ENCODE measurements at regions of chr17 and their contacts with region 1.

Region 1: GRCh38 chr17:48612854-48613691 is 2.0 kb downstream of the HOXB8 start:
- DNase-seq: peak; percentile 88
- H3K4me3 ChIP-seq: 0 out of 4 replicates have a peak overlapping the region, but pooled peaks of 1 of the 2 experiments have one; percentile 15
- H3K27ac ChIP-seq: no peak overlapping the region
- H3K4me1 ChIP-seq: no peaks in the 10 kb centered on the region; a peak in 1 of 4 replicates
- H3K27me3 ChIP-seq: peaks cover 99% of the 10 kb centered on the region
- CTCF ChIP-seq: no peak
- EP300 ChIP-seq: no peak
- RAD21 ChIP-seq: no peak

Region 2: DNA sequence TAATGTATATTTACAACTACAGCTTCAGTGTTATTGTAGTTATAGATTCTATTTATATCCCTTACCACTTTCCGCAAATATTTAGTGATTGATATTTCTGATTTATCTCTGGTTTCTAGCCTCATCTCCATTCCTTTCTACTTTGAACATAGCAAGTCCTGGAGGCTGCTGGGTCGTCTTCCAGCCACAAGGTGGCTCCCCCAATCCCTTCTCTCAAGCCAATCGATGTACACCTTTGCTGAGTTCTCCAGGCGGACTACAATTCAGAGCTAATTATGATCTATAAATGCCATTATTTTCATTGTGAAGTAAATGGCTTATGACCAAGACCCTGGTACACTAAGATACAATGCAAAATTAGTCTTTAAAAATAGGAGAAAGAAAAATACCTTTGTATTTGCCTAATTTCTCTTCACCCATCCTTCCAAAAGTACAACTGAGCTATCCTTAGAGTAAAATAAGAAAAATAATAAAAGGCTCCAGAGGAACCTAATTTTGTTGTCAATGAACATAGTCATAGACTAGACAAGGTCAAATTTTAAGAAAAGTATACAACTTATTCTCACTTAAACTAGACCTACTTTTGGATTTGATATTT is 305.2 kb before region 1 on chr17:
- CTCF ChIA-PET with region 1: interaction called, 59 read pairs
- POLR2A ChIA-PET with region 1: no interaction called
- DNase-seq: peak; percentile 48
- H3K4me3 ChIP-seq: no peak overlapping the region; a peak in 1 of 4 replicates
- H3K27ac ChIP-seq: no peak overlapping the region
- H3K4me1 ChIP-seq: no peaks in the 10 kb centered on the region; a peak in 1 of 4 replicates
- H3K27me3 ChIP-seq: peaks cover 52% of the 10 kb centered on the region
- CTCF ChIP-seq: peak; percentile 97
- EP300 ChIP-seq: no peak
- RAD21 ChIP-seq: peak; percentile 67

Region 3: GRCh38 chr17:48526608-48527546 is 86.2 kb before region 1 on chr17:
- CTCF ChIA-PET with region 1: no interaction called
- POLR2A ChIA-PET with region 1: no interaction called
- DNase-seq: peak; percentile 32
- H3K4me3 ChIP-seq: no peak overlapping the region
- H3K27ac ChIP-seq: no peak overlapping the region
- H3K4me1 ChIP-seq: no peaks in the 10 kb centered on the region
- H3K27me3 ChIP-seq: peaks cover 98% of the 10 kb centered on the region
- CTCF ChIP-seq: no peak
- EP300 ChIP-seq: no peak
- RAD21 ChIP-seq: no peak

Region 4: DNA sequence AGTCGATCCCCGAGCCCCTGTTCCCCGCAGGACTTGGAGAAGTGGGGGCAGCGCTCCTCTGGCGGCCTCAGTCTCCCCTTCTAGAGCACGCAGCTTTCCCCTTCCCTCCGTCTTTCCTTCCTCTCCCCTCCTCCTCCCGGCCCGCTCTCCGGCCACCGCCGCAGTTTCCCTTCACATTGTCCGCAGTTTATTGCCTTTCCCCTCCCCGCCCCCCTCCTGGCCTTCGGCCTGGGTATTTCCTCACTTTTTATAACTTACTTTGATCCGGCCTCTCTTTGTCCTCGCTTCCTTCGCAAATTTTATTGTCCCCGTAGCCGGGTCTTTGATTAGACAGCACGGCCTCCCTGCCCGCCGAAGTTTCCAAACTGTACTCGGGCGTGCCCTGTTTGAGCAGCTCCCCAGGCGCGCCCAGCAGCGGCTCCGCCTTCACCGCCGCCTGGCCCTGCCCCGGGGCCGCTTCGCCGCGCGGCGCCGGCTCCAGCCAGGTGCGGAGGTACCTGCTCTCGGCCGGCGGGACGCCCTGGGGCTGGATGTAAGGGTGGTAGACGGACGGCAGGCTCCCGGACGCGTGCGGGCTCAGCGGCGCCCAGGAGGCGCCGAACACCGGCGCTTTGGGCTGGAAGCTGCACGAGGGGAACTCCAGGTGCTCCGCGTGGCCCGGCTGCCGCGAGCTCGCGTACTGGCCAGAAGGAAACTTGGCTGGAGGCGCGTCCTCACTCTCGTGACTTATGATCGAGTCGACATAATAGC is 12.6 kb after region 1 on chr17:
- CTCF ChIA-PET with region 1: interaction called, 23 read pairs
- POLR2A ChIA-PET with region 1: no interaction called
- DNase-seq: no peak
- H3K4me3 ChIP-seq: no peak overlapping the region
- H3K27ac ChIP-seq: no peak overlapping the region
- H3K4me1 ChIP-seq: no peaks in the 10 kb centered on the region
- H3K27me3 ChIP-seq: peaks cover 98% of the 10 kb centered on the region
- CTCF ChIP-seq: no peak
- EP300 ChIP-seq: no peak
- RAD21 ChIP-seq: no peak

Region 5: GRCh38 chr17:48636177-48637018 is 23.3 kb after region 1 on chr17:
- CTCF ChIA-PET with region 1: interaction called, 33 read pairs
- POLR2A ChIA-PET with region 1: no interaction called
- DNase-seq: peak; percentile 91
- H3K4me3 ChIP-seq: peak overlapping the region in 1 of 2 experiments; percentile 21; a peak in 1 of 4 replicates
- H3K27ac ChIP-seq: no peak overlapping the region
- H3K4me1 ChIP-seq: no peaks in the 10 kb centered on the region
- H3K27me3 ChIP-seq: peaks cover 100% of the 10 kb centered on the region
- CTCF ChIP-seq: peak; percentile 69
- EP300 ChIP-seq: no peak
- RAD21 ChIP-seq: no peak

Region 6: DNA sequence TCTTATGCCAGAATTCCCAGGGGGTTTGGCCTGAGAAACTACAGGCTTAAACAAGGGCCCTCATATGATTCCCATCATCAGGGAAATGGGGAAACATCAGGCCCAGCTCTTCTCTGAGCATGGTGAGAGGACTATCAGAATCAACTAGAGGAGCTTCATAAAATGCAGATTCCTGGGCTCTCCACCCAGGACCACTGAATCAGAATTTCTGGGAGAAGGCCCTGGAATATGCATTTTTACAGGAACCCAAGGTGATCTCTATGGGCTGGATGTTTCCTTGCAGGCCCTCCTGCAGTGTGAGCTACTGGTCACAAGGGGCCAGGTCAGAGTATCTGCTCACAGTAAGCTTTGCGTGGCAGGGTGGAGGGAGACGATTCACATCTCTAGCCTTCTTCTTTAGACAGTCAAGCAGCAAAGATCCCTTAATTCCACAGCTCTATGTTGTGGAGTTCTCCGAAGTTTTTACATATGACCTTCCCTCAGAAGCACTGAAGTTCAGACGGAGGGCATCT is 154.2 kb after region 1 on chr17:
- CTCF ChIA-PET with region 1: no interaction called
- POLR2A ChIA-PET with region 1: no interaction called
- DNase-seq: no peak
- H3K4me3 ChIP-seq: no peak overlapping the region
- H3K27ac ChIP-seq: no peak overlapping the region
- H3K4me1 ChIP-seq: no peaks in the 10 kb centered on the region
- H3K27me3 ChIP-seq: peaks cover 90% of the 10 kb centered on the region
- CTCF ChIP-seq: no peak
- EP300 ChIP-seq: no peak
- RAD21 ChIP-seq: no peak

Region 7: GRCh38 chr17:48873209-48873608 is 260.1 kb after region 1 on chr17:
- CTCF ChIA-PET with region 1: no interaction called
- POLR2A ChIA-PET with region 1: no interaction called
- DNase-seq: no peak
- H3K4me3 ChIP-seq: no peak overlapping the region
- H3K27ac ChIP-seq: no peak overlapping the region
- H3K4me1 ChIP-seq: no peaks in the 10 kb centered on the region; a peak in 1 of 4 replicates
- H3K27me3 ChIP-seq: peaks cover 10% of the 10 kb centered on the region; the same call in 1 of the 2 replicates
- CTCF ChIP-seq: no peak
- EP300 ChIP-seq: no peak
- RAD21 ChIP-seq: no peak

Measured in SK-N-SH (cell line).